PC-3 (cell line): ENCODE measurements at regions of chr19 and their contacts with region 1.

Region 1: GRCh38 chr19:18846862-18847548 is 15.2 kb downstream of the UPF1 start:
- DNase-seq: peak; percentile 74
- ATAC-seq: peak; percentile 95
- H3K4me3 ChIP-seq: no peak overlapping the region
- H3K27ac ChIP-seq: no peak overlapping the region
- H3K4me1 ChIP-seq: no peaks in the 10 kb centered on the region
- H3K27me3 ChIP-seq: no peaks in the 10 kb centered on the region
- CTCF ChIP-seq: peak; percentile 93

Region 2: DNA sequence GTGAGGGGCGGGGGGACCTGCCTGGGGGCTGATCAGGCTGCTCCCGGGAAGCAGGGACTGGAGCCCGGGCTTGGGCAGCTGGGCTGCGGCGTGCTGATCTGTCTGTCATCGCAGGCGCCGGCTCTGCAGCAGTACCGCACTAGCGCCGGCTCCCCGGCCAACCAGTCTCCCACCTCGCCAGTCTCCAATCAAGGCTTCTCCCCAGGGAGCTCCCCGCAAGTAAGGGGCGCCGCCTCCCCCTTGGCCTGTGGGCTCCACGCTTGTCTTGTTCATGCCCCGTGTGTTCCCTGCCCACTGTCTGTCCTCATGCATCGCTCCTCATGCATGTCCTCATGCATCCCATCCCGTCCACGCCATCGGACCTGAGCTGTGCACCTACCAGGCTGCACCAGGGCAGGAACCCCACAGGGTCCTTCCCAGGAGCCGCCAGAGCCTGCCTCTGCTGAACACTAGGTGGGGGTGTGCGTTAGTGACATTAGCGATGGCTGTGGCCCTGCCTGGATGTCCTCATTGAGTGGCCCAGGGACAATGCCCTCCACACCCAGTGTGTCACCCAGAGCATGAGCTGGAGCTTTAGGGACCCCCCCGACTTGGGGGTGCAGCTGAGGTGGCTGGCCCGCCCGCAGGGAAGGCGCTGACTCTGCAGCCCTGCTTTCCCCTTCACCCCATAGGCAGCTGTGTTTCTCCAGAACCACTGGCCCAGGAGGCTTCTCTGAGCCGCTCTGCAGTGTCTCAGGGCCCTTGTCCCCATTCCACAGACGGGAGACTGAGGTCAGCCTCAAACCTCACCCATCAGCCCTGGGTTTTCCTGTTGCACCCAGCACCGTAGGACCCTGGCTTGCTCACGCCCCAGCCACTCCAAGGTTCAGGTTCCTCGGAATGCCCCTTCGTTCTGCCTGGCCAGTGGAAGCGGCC is 75.4 kb before region 1 on chr19:
- CTCF ChIA-PET with region 1: interaction called, 4 read pairs
- POLR2A ChIA-PET with region 1: no interaction called
- intact Hi-C with region 1: loop called (anchors 1 kb)
- DNase-seq: peak; percentile 23
- ATAC-seq: peak; percentile 30; the same call in 1 of the 2 replicates
- H3K4me3 ChIP-seq: no peak overlapping the region
- H3K27ac ChIP-seq: no peak overlapping the region
- H3K4me1 ChIP-seq: peaks cover 12% of the 10 kb centered on the region
- H3K27me3 ChIP-seq: no peaks in the 10 kb centered on the region
- CTCF ChIP-seq: peak; percentile 43; the same call in 1 of the 2 replicates

Region 3: DNA sequence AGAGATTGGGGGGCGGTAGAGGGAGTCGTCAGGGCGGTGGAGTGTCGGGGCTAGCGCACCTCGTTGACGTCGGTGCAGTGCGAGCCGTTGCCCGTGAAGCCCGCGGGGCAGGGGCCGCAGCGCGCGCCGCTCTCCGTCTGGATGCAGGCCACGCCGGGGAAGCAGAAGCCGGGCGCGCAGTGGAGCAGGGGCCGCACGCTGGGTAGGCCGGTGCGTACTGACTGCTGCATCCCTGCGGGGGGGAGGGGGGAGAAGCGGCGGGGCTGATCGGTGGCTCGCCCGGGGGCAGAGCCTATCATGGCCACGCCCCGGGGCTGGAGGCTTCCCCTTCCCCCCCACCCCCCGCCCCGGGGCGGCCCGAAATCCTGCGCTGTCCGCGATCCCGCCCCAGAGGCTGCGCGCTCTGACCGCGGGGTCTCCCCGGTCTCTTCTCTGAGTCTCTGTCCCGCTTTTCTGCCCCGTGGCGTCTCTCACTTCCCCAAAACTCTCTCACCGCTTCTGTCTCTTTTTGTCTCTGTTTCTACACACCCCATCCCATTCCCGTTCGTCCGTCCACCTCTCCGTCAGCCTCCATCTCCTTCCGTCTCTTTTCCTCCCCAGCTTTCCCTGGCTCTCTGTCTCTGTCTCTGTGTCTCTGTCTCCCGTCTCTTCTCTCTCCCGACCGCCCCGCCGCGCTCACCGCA is 57.0 kb before region 1 on chr19:
- CTCF ChIA-PET with region 1: no interaction called
- POLR2A ChIA-PET with region 1: no interaction called
- intact Hi-C with region 1: no loop called
- DNase-seq: no peak
- ATAC-seq: 0 out of 2 replicates have a peak, but pooled peaks have one; percentile 10
- H3K4me3 ChIP-seq: peak overlapping the region; percentile 24; the same call in 1 of the 2 replicates
- H3K27ac ChIP-seq: no peak overlapping the region
- H3K4me1 ChIP-seq: no peaks in the 10 kb centered on the region
- H3K27me3 ChIP-seq: peaks cover 27% of the 10 kb centered on the region
- CTCF ChIP-seq: no peak

Region 4: DNA sequence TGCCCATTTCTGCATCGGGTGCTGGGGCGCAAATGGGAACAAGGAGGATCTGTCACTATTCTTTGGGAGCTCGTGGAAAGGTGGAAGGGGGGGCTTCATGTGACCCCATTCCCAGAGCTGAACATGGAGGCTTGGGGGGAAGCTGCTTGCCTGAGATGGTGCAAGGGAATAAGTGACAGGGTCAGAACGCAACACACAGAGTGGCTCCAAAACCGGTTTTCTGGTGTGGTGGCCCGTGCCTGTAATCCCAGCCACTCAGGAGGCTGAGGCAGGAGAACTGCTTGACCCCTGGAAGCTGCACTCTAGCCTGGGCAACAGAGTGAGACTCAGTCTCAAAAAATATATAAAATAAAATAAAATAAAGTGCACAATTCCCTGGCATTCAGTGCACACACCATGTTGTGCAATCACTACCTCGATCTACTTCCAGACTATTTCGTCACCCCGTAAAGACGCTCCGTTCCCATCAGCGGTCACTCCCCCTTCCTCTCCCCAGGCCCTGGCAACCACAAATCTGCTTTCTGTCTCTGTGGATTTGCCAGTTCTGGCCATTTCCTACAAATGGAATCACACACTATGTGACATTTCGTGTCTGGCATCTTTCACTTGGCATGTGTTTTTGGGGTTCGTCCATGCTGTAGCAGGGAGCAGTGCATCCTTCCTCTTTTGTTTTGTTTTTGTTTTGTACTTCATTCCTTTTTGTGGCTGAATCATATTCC is 37.7 kb before region 1 on chr19:
- CTCF ChIA-PET with region 1: no interaction called
- POLR2A ChIA-PET with region 1: no interaction called
- intact Hi-C with region 1: no loop called
- DNase-seq: peak; percentile 38
- ATAC-seq: no peak
- H3K4me3 ChIP-seq: no peak overlapping the region
- H3K27ac ChIP-seq: no peak overlapping the region
- H3K4me1 ChIP-seq: no peaks in the 10 kb centered on the region
- H3K27me3 ChIP-seq: no peaks in the 10 kb centered on the region
- CTCF ChIP-seq: no peak

Region 5: DNA sequence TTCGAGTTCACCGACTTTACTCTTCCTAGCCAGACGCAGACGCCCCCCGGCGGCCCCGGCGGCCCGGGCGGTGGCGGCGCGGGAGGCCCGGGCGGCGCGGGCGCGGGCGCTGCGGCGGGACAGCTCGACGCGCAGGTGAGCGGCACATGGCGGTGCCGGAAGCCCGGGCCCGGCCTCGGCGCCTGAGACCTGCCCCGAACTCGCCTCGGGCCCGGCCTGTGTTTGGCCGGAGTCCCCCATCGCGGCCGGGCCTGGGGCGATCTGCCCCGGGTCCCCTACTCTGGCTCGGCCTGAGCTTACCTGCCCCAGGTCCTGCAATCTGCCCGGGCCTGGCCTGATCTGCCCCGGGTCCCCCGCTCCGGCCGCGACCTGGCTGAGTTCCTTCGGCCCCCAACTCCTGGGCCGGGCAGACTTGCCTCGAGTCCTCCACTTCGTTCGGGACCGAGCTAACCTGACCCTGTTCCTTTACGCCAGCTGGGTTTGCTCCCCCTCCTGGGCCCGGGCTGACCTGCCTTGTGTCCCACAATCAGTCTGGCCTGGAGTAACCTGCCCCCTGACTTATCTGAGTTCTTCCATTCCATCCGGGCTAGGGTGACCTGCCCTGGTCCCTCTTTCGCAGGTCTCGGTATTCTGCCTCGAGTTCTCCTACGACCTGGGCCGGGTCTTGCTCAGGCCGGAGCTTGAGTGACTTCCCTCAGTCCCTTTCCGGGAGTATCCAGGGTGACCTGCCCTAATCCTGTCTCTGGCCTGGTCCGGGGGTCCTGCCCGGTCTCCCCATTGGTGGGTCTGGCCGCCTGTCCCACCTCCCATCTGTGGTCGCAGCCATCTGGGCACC is 14.5 kb before region 1 on chr19:
- CTCF ChIA-PET with region 1: interaction called, 14 read pairs
- POLR2A ChIA-PET with region 1: no interaction called
- intact Hi-C with region 1: no loop called
- DNase-seq: peak; percentile 16
- ATAC-seq: peak; percentile 40
- H3K4me3 ChIP-seq: peak overlapping the region; percentile 99
- H3K27ac ChIP-seq: no peak overlapping the region
- H3K4me1 ChIP-seq: peaks cover 7% of the 10 kb centered on the region; the same call in 1 of the 2 replicates
- H3K27me3 ChIP-seq: no peaks in the 10 kb centered on the region
- CTCF ChIP-seq: 0 out of 2 replicates have a peak, but pooled peaks have one; percentile 28

Region 6: DNA sequence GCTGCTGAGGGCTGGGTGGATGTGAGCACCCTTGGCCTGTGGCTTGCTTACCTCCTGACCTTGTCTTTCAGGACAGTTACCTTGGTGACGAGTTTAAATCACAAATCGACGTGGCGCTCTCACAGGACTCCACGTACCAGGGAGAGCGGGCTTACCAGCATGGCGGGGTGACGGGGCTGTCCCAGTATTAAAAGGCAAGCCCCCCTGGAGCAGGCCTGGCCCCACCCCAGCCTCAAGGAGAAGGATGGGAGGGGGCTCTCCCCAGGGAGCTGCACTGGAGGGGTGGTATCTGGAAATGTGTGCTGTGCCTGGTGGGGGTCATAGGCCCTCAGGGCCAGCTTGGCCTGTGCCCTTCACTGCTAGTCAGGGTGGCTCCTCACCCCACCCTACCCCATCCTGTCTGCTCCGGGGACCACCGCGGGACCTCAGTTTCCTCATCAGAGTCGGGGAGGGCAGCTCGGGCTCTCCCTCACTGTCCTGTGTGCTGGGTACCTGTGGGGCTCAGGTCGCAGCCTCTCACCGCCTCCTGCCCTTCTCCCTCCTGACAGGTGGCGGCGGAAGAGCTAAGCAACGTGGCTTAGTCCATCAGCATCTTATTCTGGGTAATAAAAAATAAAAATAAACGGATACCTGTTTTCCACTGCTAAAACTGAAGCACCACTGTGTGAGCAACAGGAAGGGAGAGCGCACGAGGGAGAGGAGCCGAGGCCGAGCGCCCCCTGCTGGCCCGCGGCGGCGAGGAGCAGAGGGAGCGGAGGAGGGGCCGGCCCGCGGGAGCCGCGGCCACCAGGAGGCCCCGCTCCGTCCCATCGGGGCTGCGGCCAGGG is 19.2 kb after region 1 on chr19:
- CTCF ChIA-PET with region 1: no interaction called
- POLR2A ChIA-PET with region 1: no interaction called
- intact Hi-C with region 1: no loop called
- DNase-seq: peak; percentile 77
- ATAC-seq: peak; percentile 96
- H3K4me3 ChIP-seq: no peak overlapping the region
- H3K27ac ChIP-seq: no peak overlapping the region
- H3K4me1 ChIP-seq: no peaks in the 10 kb centered on the region
- H3K27me3 ChIP-seq: no peaks in the 10 kb centered on the region
- CTCF ChIP-seq: peak; percentile 99